AG04449 (cell line): ENCODE measurements at regions of chr5 and their contacts with region 1.

Region 1: GRCh38 chr5:64147849-64148441 is 17.7 kb upstream of the RNF180 start:
- DNase-seq: no peak
- H3K4me3 ChIP-seq: no peak overlapping the region
- CTCF ChIP-seq: peak; percentile 65

Region 2: DNA sequence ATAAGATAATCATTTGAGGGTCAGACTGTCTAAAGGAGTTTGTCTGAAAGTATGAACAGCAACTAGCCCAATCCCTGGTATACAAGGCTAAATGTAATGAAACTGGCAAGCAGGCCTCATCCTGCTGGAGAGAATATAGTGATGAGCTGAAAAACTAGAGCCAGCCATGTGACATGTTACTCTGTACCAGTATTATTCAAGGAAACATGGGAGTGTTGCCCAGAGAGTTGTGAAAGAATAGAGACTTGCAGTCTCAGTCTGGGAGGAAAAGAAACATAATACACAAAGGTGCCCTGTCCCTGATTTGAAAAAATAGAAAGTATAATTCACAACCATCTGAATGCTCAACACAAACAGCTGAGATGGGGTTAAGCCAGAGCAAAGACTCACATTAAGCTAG is 147.8 kb before region 1 on chr5:
- CTCF ChIA-PET with region 1: no interaction called
- POLR2A ChIA-PET with region 1: no interaction called
- DNase-seq: no peak
- H3K4me3 ChIP-seq: no peak overlapping the region
- CTCF ChIP-seq: no peak

Region 3: DNA sequence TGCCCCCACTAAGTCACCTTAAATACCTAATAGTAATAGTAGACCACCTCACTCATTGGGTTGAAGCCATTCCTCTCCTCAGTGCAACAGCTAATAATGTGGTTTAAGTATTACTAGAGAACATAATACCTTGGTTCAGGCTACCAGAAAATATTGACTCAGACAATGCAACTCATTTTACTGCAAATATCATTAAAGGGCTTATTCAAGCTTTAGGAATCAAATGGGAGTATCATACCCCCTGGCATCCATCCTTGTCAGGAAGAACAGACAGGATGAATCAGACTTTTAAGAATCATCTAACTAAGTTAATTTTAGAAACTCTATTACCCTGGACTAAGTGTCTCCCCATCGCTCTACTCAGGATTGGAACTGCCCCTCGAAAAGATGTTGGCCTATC is 10.9 kb after region 1 on chr5:
- CTCF ChIA-PET with region 1: interaction called, 13 read pairs
- POLR2A ChIA-PET with region 1: no interaction called
- DNase-seq: no peak
- H3K4me3 ChIP-seq: no peak overlapping the region
- CTCF ChIP-seq: no peak

Region 4: GRCh38 chr5:64190562-64191306 is 42.8 kb after region 1 on chr5:
- CTCF ChIA-PET with region 1: no interaction called
- POLR2A ChIA-PET with region 1: no interaction called
- DNase-seq: no peak
- H3K4me3 ChIP-seq: no peak overlapping the region
- CTCF ChIP-seq: no peak

Region 5: DNA sequence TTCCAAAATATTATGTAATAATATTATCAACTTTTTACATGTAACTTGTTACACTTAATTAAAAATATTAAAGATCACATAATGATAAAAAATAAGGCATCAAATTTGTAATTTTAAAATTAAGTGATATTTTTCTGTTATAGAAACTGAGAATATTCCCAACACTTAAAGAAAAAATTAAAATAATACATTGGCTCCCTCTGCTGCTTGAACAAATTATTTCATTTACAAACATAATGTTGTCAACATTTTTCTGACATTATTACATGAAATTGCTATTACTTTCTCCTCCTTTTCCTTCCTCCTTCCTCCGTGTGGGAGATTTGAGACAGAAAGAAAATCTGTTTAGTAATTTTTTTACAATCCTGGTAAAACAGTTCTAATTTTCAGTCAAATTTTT is 60.0 kb after region 1 on chr5:
- CTCF ChIA-PET with region 1: interaction called, 63 read pairs
- POLR2A ChIA-PET with region 1: no interaction called
- DNase-seq: no peak
- H3K4me3 ChIP-seq: no peak overlapping the region
- CTCF ChIP-seq: no peak

Region 6: DNA sequence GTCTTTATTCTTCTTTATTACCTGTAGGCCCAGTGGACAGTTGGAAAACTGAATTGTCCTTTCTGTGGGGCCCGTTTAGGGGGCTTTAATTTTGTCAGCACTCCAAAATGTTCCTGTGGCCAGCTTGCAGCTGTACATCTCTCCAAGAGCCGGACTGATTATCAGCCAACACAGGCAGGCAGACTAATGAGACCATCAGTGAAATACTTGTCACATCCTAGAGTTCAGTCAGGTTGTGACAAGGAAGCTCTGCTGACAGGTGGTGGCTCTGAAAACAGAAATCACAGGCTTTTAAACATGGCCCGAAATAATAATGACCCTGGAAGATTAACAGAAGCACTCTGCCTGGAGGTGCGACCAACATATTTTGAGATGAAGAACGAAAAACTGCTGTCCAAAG is 65.6 kb after region 1 on chr5:
- CTCF ChIA-PET with region 1: interaction called, 63 read pairs
- POLR2A ChIA-PET with region 1: no interaction called
- DNase-seq: no peak
- H3K4me3 ChIP-seq: no peak overlapping the region
- CTCF ChIP-seq: no peak

Region 7: GRCh38 chr5:64612344-64612961 is 464.5 kb after region 1 on chr5:
- CTCF ChIA-PET with region 1: interaction called, 40 read pairs
- POLR2A ChIA-PET with region 1: no interaction called
- DNase-seq: no peak
- H3K4me3 ChIP-seq: no peak overlapping the region
- CTCF ChIP-seq: peak; percentile 62